ENCODE measurements at regions of chr11 and their contacts with region 1.

Region 1: DNA sequence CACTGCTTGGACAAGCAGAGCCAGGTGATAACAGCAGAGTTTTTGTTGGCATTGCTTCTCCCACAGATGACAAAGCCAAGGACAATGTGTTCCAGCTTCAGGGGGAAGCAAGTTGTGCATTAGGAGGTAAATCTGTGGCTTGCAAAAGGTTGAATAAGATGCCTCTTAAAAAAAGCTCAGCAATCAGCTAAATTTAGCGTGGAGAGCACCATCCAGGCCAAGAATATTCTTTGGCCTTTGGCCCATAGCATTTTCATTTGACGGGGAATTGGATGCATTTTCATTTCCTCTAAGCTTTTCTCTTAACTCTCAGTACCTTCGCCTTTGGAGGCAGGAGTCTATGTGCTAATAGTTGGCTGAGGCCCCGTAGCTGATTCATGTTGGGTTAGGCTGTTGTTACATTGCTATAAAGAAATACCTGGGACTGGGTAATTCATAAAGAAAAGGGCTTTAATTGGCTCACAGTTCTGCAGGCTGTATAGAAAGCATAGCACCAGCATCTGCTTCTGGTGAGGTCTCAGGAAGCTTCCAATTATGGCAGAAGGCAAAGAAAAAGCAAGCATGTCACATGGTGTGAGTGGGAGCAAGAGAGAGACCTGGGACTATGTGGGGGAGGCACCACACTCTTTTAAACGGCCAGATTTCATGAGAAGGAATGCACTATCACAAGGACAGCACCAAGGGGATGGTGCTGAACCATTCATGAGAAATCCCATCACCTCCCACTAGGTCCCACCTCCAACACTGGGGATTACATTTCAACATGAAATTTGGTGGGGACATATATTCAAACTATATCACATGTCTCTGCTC is 350.1 kb upstream of the C11orf87 start:
- DNase-seq: peak in 1 of 2 donors; percentile 81
- H3K4me3 ChIP-seq: no peak overlapping the region
- H3K27ac ChIP-seq: peak overlapping the region; percentile 50 to 60
- H3K4me1 ChIP-seq: peaks cover 0 to 9% of the 10 kb centered on the region in 2 donors
- H3K27me3 ChIP-seq: no peaks in the 10 kb centered on the region
- CTCF ChIP-seq: no peak

Region 2: GRCh38 chr11:107446822-107447431 is 1625.0 kb before region 1 on chr11:
- intact Hi-C with region 1: no loop called
- DNase-seq: no peak
- H3K4me3 ChIP-seq: no peak overlapping the region
- H3K27ac ChIP-seq: no peak overlapping the region
- H3K4me1 ChIP-seq: no peaks in the 10 kb centered on the region
- H3K27me3 ChIP-seq: no peaks in the 10 kb centered on the region
- CTCF ChIP-seq: no peak

Region 3: DNA sequence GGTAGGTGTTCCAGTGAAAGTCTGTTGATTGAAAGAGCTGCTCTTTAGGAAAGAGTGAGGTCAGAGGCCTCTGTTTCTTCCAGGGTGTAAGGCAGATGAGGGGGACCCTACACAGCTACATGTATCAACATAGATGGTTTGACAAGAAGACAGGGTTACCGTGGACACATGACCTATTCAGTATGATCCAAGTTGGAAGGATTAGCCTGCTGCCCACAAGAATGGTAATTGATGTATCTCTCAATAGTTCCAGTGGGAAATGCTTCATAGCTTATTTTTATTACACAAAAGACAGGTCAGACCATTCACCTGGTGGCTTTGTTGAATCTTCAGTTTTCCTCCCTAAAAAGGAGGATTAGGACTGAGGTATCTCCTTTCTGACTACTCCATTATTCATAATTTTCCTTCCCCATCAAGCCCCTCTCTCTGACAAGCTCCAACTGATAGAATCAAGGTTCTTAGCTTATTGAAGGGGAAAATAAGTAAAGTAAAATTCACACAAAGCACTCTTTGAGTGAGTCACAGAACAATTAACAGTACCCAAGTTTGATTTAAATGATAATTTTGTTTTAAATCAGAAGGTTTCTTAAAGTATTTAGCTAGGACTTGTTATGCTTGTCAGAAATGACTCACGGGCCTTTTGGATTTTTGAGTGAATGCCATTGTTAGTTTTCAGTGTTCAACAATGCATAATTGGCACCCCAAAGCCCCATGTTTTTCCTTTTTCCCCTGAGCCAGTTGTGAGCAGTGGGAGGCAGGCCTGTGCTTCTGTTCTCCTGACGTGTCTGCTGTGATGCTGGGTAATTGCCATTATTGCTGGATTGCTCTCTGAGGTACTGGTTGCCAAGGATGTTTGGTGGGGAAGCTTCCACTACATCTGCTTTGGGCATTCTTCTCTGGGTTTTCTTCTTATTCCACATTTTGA is 33.8 kb before region 1 on chr11:
- intact Hi-C with region 1: loop called (anchors 1 kb)
- DNase-seq: peak in 1 of 2 donors; percentile 65
- H3K4me3 ChIP-seq: no peak overlapping the region
- H3K27ac ChIP-seq: peak overlapping the region; percentile 7 to 17
- H3K4me1 ChIP-seq: peaks cover 0 to 5% of the 10 kb centered on the region in 2 donors
- H3K27me3 ChIP-seq: no peaks in the 10 kb centered on the region
- CTCF ChIP-seq: no peak

Region 4: GRCh38 chr11:109184376-109184775 is 112.5 kb after region 1 on chr11:
- intact Hi-C with region 1: no loop called
- DNase-seq: no peak
- H3K4me3 ChIP-seq: no peak overlapping the region
- H3K27ac ChIP-seq: no peak overlapping the region
- H3K4me1 ChIP-seq: no peaks in the 10 kb centered on the region
- H3K27me3 ChIP-seq: no peaks in the 10 kb centered on the region
- CTCF ChIP-seq: no peak

Region 5: GRCh38 chr11:109480251-109480650 is 408.3 kb after region 1 on chr11:
- intact Hi-C with region 1: no loop called
- DNase-seq: no peak
- H3K4me3 ChIP-seq: no peak overlapping the region
- H3K27ac ChIP-seq: no peak overlapping the region
- H3K4me1 ChIP-seq: no peaks in the 10 kb centered on the region
- H3K27me3 ChIP-seq: no peaks in the 10 kb centered on the region
- CTCF ChIP-seq: no peak

Measured in ascending aorta (tissue), 2 donors.